Transverse colon (tissue), 4 donors: ENCODE measurements at regions of chr4 and their contacts with region 1.

Region 1: DNA sequence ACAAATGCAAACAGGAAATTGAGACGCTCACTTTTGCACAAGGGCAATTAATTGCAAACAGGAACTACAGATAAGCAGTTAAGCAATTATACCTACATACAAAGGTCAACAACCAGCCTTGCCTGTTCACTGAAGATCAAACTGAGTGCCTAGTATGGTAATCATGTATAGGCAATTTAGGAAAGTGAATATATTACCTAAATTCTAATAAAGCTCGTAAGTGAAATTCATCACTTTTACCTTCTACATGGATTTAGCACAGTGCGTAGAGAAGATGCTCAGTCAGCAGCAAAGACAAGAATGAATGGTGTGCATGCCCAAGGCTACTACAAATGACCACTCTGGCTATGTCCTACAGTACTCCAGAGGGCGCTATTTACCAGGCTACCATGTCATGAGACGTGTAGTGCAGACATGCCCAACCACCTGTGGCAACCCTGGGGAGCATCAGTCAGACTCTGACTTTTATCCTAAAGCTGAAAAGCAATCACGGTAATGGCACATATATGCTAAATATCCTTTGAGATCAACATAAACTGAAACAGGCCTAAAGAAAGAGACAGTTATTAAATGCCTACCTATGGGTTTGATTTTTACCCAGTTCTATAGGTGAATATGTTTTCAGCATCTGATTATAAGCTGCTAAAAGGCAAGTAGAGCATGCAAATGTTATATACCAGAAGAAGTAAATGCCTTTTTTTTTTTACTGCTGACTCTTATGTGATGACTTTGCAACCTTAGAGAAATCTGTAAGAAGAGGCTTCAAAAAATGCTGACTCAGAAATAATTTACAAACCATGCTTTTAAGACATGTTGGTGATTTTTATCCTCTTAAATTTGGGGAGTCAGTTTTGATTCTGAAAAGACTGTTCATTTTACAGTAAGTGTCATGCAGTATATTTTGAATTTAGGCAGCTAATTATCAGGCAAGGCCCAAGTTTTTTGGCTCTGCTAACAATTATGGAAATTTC is 178.0 kb downstream of the PPP3CA start:
- DNase-seq: peak; percentile 72
- H3K4me3 ChIP-seq: no peak overlapping the region
- H3K27ac ChIP-seq: no peak overlapping the region
- H3K4me1 ChIP-seq: peaks cover 0 to 14% (median 0%) of the 10 kb centered on the region in 4 donors
- H3K27me3 ChIP-seq: no peaks in the 10 kb centered on the region
- CTCF ChIP-seq: peak; percentile 65 to 89 (median 78)
- EP300 ChIP-seq: no peak
- POLR2A ChIP-seq: no peak

Region 2: DNA sequence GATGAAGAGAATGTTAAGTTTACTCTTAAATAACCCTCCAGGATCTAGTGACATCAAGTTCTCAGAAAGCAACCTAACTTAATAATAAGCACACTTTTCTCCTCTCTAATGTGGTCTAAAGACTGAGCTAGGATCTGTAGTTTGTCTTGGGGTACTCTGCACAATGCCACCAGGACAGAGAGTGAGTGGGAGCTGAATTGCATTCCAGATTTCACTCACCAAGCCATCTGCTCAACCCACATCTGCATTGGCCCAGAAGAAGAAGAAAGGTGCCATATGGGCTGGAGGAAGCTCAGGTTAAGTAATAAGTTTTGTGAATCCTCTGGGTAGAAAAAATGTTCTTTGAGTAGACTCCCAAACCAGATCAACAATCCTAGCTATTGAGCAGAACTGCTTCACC is 206.6 kb before region 1 on chr4:
- in situ Hi-C with region 1: no loop called
- intact Hi-C with region 1: no loop called
- DNase-seq: no peak
- H3K4me3 ChIP-seq: no peak overlapping the region
- H3K27ac ChIP-seq: no peak overlapping the region
- H3K4me1 ChIP-seq: no peaks in the 10 kb centered on the region
- H3K27me3 ChIP-seq: no peaks in the 10 kb centered on the region
- CTCF ChIP-seq: no peak
- EP300 ChIP-seq: no peak
- POLR2A ChIP-seq: no peak

Region 3: GRCh38 chr4:101724093-101724492 is 554.8 kb after region 1 on chr4:
- in situ Hi-C with region 1: loop called in 2 of 4 experiments (anchors 10 to 25 kb)
- intact Hi-C with region 1: no loop called
- DNase-seq: no peak
- H3K4me3 ChIP-seq: no peak overlapping the region
- H3K27ac ChIP-seq: no peak overlapping the region
- H3K4me1 ChIP-seq: no peaks in the 10 kb centered on the region
- H3K27me3 ChIP-seq: no peaks in the 10 kb centered on the region
- CTCF ChIP-seq: no peak
- EP300 ChIP-seq: no peak
- POLR2A ChIP-seq: no peak

Region 4: GRCh38 chr4:101730291-101731117 is 561.2 kb after region 1 on chr4:
- in situ Hi-C with region 1: loop called in 2 of 4 experiments (anchors 5 to 10 kb)
- intact Hi-C with region 1: no loop called
- DNase-seq: peak; percentile 69
- H3K4me3 ChIP-seq: no peak overlapping the region
- H3K27ac ChIP-seq: no peak overlapping the region
- H3K4me1 ChIP-seq: no peaks in the 10 kb centered on the region
- H3K27me3 ChIP-seq: no peaks in the 10 kb centered on the region
- CTCF ChIP-seq: peak; percentile 55 to 78 (median 66)
- EP300 ChIP-seq: no peak
- POLR2A ChIP-seq: no peak